CD8-positive, alpha-beta T cell (primary cell): ENCODE measurements at regions of chr3 and their contacts with region 1.

Region 1: GRCh38 chr3:98901392-98902350 is at the start of gene DCBLD2:
- DNase-seq: peak; percentile 75 to 96 (median 87)
- ATAC-seq: peak; percentile 97
- H3K4me3 ChIP-seq: peak within 1 kb of the TSS; percentile 62 to 91
- H3K4me3 Mint-ChIP-seq: peak within 1 kb of the TSS; percentile 94
- H3K27ac ChIP-seq: peak within 1 kb of the TSS; percentile 37 to 46
- H3K27ac Mint-ChIP-seq: peak within 1 kb of the TSS; percentile 73
- H3K4me1 ChIP-seq: peaks cover 15% of the 10 kb centered on the region
- H3K4me1 Mint-ChIP-seq: peaks cover 24% of the 10 kb centered on the region
- H3K27me3 ChIP-seq: no peaks in the 10 kb centered on the region
- H3K27me3 Mint-ChIP-seq: peaks cover 11% of the 10 kb centered on the region
- CTCF ChIP-seq: no peak
- total RNA-seq, gene DCBLD2: 1.6 to 1.8 TPM

Region 2: GRCh38 chr3:97764407-97765238 is 1137.0 kb before region 1 on chr3 and contains the start of gene ARL6:
- CTCF ChIA-PET with region 1: no interaction called
- POLR2A ChIA-PET with region 1: no interaction called
- intact Hi-C with region 1: loop called in 1 of 2 experiments (anchors 2 kb)
- DNase-seq: peak; percentile 28 to 83 (median 70)
- ATAC-seq: peak; percentile 90
- H3K4me3 ChIP-seq: peak within 1 kb of the TSS; percentile 76 to 88
- H3K4me3 Mint-ChIP-seq: peak within 1 kb of the TSS; percentile 98
- H3K27ac ChIP-seq: peak within 1 kb of the TSS; percentile 64 to 72
- H3K27ac Mint-ChIP-seq: peak within 1 kb of the TSS; percentile 95
- H3K4me1 ChIP-seq: peaks cover 14% of the 10 kb centered on the region
- H3K4me1 Mint-ChIP-seq: peaks cover 34% of the 10 kb centered on the region
- H3K27me3 ChIP-seq: no peaks in the 10 kb centered on the region
- H3K27me3 Mint-ChIP-seq: no peaks in the 10 kb centered on the region
- CTCF ChIP-seq: no peak
- total RNA-seq, gene ARL6: 0.97 to 1.1 TPM

Region 3: GRCh38 chr3:98361289-98361688 is 540.4 kb before region 1 on chr3:
- CTCF ChIA-PET with region 1: no interaction called
- POLR2A ChIA-PET with region 1: no interaction called
- intact Hi-C with region 1: no loop called
- DNase-seq: no peak
- ATAC-seq: no peak
- H3K4me3 ChIP-seq: no peak overlapping the region
- H3K4me3 Mint-ChIP-seq: no peak overlapping the region
- H3K27ac ChIP-seq: no peak overlapping the region
- H3K27ac Mint-ChIP-seq: no peak overlapping the region
- H3K4me1 ChIP-seq: no peaks in the 10 kb centered on the region
- H3K4me1 Mint-ChIP-seq: no peaks in the 10 kb centered on the region
- H3K27me3 ChIP-seq: no peaks in the 10 kb centered on the region
- H3K27me3 Mint-ChIP-seq: no peaks in the 10 kb centered on the region
- CTCF ChIP-seq: no peak

Region 4: DNA sequence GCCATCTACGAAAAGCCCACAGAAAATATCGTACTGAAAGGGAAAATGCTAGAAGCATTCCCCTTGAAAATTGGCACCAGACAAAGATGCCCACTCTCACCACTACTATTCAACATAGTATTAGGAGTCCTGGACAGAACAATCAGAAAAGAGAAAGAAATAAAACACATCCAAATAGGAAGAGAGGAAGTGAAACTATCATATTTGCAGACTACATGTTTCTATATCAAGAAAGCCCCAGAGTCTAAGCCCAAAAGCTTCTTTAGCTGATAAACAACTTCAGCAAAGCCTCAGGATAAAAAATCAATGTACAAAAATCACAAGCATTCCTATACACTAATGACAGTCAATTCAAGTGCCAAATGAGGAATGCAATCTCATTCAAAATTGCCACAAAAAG is 495.6 kb before region 1 on chr3:
- CTCF ChIA-PET with region 1: no interaction called
- POLR2A ChIA-PET with region 1: no interaction called
- intact Hi-C with region 1: no loop called
- DNase-seq: no peak
- ATAC-seq: no peak
- H3K4me3 ChIP-seq: no peak overlapping the region
- H3K4me3 Mint-ChIP-seq: no peak overlapping the region
- H3K27ac ChIP-seq: no peak overlapping the region
- H3K27ac Mint-ChIP-seq: no peak overlapping the region
- H3K4me1 ChIP-seq: no peaks in the 10 kb centered on the region
- H3K4me1 Mint-ChIP-seq: peaks cover 3% of the 10 kb centered on the region
- H3K27me3 ChIP-seq: no peaks in the 10 kb centered on the region
- H3K27me3 Mint-ChIP-seq: no peaks in the 10 kb centered on the region
- CTCF ChIP-seq: no peak

Region 5: DNA sequence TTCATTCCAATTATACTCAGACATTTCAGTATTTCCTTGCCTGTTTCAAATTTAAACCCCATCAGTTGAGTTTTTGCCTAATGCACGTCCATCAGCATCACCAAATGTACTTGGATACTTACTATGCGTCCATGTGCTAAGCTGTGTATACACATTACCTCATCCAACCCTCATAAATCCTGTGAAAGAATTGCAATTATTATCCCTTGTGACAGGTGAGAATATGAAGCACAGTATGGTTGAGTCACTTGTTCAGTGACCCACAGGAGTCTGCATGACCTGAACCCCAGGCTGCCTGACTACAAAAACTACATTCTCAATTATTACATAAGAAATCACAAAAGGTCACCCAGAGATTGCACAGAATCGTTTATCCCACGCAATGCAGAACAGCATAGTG is 401.6 kb before region 1 on chr3:
- CTCF ChIA-PET with region 1: no interaction called
- POLR2A ChIA-PET with region 1: no interaction called
- intact Hi-C with region 1: no loop called
- DNase-seq: no peak
- ATAC-seq: no peak
- H3K4me3 ChIP-seq: no peak overlapping the region
- H3K4me3 Mint-ChIP-seq: no peak overlapping the region
- H3K27ac ChIP-seq: no peak overlapping the region
- H3K27ac Mint-ChIP-seq: no peak overlapping the region
- H3K4me1 ChIP-seq: no peaks in the 10 kb centered on the region
- H3K4me1 Mint-ChIP-seq: peaks cover 5% of the 10 kb centered on the region
- H3K27me3 ChIP-seq: no peaks in the 10 kb centered on the region
- H3K27me3 Mint-ChIP-seq: no peaks in the 10 kb centered on the region
- CTCF ChIP-seq: no peak

Region 6: DNA sequence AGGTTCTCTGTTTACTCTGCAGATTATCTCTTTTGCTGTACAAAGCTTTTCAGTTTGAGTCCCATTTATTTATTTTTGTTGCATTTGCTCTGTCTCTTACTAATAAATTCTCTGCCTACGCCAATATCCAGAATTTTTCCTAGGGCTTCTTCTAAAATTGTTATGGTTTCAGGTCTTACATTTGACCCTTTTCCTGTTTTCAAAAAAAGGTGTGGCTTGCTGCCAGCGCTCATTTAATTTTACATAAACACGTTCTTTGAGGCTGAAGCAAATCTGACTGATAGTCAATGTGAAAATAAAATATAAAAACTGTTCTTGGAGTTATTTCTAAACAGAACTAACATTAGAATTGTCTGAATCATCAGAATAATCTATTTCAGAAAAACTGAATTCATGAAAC is 32.3 kb before region 1 on chr3:
- CTCF ChIA-PET with region 1: no interaction called
- POLR2A ChIA-PET with region 1: no interaction called
- intact Hi-C with region 1: no loop called
- DNase-seq: no peak
- ATAC-seq: no peak
- H3K4me3 ChIP-seq: no peak overlapping the region
- H3K4me3 Mint-ChIP-seq: no peak overlapping the region
- H3K27ac ChIP-seq: no peak overlapping the region
- H3K27ac Mint-ChIP-seq: no peak overlapping the region
- H3K4me1 ChIP-seq: no peaks in the 10 kb centered on the region
- H3K4me1 Mint-ChIP-seq: no peaks in the 10 kb centered on the region
- H3K27me3 ChIP-seq: no peaks in the 10 kb centered on the region
- H3K27me3 Mint-ChIP-seq: no peaks in the 10 kb centered on the region
- CTCF ChIP-seq: no peak